Activated CD8-positive, alpha-beta T cell treated with anti-CD3 and anti-CD28 coated beads, Interleukin-2, amount 10 ng/mL, durations not matched to agents 7 days and 5 days (primary cell): ENCODE measurements at regions of chr1 and their contacts with region 1.

Region 1: DNA sequence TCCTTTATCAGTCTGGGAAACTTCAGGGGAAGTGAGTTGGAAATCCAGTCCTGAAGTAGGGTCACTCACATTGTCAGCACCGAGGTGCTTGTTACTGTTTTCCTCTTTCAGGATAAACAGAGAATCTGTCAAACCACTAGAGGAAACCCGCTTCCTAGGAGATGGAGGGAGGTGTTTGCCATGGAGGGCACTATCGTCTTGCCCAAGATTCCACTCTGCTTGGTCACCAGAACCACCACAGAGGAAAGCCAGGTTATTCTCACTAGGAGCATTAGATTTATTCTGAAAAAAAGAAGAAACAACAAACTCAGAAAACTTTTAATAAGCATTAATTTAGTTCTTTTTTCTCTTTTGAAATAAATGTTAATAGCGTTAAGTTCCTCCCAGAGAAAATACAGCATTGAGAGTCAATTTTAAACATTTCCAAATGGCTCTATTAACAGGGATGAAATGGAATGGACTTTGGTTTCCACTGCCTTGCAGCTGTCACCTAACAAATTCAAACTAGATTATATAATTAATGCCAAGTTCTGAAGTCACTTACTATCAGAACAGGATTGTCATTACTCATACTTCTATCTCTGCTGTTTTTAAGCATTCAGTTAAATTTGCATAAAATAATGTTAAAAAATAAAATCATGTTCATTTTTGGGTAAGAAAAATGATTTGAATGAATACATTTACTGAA is 242.8 kb downstream of the CRB1 start:
- DNase-seq: no peak
- ATAC-seq: no peak
- H3K4me3 Mint-ChIP-seq: no peak overlapping the region
- H3K27ac Mint-ChIP-seq: no peak overlapping the region
- H3K4me1 Mint-ChIP-seq: no peaks in the 10 kb centered on the region
- H3K27me3 Mint-ChIP-seq: no peaks in the 10 kb centered on the region

Region 2: DNA sequence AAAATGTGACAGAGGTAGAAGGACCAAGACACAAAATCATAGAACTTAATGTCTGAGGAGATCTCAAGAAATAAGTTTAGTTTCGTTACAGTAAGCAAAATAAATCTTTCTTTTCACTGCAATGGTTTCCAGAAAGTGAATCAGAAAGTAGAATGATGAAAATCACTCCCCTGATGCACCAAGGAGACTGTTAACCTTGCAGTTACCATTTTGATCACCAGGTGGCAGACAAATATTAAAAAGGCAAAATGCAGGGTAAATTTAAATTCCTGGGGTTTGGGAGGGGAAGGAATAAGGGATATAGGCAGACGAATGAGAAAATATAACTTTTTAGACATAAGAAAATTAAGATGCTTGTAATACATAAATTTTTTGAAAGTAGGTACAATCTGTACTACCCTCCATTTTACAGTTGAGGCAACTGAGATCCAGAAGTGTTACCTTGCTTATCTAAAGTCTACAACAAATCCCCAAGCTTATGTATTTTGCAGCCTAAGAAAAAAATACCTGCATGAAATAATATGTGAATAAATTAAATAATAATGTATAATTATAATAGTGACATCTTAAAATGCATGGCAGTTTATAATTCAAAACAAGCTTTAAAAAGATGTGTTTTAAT is 10.4 kb after region 1 on chr1:
- CTCF ChIA-PET with region 1: interaction called, 10 read pairs
- POLR2A ChIA-PET with region 1: no interaction called
- DNase-seq: peak; percentile 49
- ATAC-seq: peak; percentile 36
- H3K4me3 Mint-ChIP-seq: no peak overlapping the region
- H3K27ac Mint-ChIP-seq: no peak overlapping the region
- H3K4me1 Mint-ChIP-seq: no peaks in the 10 kb centered on the region
- H3K27me3 Mint-ChIP-seq: no peaks in the 10 kb centered on the region

Region 3: DNA sequence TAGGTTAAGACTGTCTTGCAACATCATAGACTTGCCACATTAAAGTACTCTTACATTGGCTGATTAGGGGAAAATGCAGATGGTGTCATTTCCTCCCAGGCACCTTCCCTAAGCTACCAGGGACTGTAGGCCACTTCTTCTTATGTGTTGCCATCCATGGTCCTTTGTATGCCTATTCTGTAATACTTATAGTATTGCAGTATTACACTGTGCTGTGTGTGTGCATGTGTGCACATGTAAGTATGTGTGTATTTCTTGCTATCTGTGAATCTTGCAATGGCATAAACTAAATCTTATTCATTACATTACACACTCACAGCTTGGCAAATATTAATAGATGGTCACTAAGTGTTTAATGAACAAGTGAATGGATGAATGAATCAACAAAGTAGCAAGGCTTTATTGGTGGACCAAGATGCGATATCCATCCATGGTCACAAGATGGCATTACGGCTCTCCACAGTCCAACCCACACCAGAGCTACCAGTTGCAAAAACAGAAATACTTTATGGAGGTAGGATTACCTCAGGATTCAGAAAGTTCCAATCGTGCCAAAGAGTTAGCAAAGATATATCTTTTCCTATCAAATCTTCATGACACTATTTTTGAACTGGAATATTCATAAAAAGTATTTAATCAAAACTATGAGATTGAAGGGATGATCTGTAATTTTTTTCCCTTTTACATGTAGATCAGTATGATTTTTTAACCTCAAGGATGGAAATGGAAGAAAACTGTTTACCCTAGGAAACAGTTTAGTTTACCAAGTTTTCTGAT is 104.3 kb after region 1 on chr1:
- CTCF ChIA-PET with region 1: no interaction called
- POLR2A ChIA-PET with region 1: no interaction called
- DNase-seq: peak; percentile 45
- ATAC-seq: peak; percentile 67
- H3K4me3 Mint-ChIP-seq: no peak overlapping the region
- H3K27ac Mint-ChIP-seq: no peak overlapping the region
- H3K4me1 Mint-ChIP-seq: no peaks in the 10 kb centered on the region
- H3K27me3 Mint-ChIP-seq: no peaks in the 10 kb centered on the region